ENCODE measurements at regions of chr4 and their contacts with region 1.

Region 1: DNA sequence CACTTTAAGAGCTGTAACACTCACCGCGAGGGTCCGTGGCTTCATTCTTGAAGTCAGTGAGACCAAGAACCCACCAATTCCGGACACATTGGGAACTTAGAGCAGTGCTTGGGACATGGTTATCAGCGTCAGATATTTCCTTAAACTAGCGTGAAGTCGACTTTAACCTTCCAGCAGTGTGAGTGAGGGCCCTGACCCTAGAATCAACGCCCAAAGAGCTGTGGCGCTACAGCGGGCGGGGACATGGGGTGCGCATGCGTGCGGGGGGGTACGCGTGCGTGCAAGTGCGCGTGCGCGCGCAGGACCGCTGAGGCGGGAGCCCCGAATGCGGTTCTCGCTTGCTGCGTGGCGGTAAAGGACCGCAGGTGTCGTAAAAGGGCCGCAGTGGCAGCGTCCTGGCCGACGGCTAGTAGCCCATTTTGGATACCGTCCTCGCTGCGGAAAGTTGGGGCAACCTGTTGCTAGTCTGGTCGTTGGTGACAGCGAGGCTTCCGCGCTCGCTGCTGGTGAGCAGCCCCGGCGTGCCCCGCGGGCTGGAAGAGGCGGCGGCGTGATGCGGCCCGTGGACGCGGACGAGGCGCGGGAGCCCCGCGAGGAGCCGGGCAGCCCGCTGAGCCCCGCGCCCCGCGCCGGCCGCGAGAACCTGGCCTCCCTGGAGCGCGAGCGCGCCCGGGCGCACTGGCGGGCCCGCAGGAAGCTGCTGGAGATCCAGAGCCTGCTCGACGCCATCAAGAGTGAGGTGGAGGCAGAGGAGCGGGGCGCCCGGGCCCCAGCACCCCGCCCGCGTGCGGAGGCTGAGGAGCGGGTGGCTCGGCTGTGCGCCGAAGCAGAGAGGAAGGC is 19.8 kb upstream of the S100P start:
- DNase-seq: peak; percentile 90
- H3K4me3 ChIP-seq: peak overlapping the region; percentile 64
- H3K27ac ChIP-seq: no peak overlapping the region
- H3K27me3 ChIP-seq: no peaks in the 10 kb centered on the region
- CTCF ChIP-seq: no peak

Region 2: DNA sequence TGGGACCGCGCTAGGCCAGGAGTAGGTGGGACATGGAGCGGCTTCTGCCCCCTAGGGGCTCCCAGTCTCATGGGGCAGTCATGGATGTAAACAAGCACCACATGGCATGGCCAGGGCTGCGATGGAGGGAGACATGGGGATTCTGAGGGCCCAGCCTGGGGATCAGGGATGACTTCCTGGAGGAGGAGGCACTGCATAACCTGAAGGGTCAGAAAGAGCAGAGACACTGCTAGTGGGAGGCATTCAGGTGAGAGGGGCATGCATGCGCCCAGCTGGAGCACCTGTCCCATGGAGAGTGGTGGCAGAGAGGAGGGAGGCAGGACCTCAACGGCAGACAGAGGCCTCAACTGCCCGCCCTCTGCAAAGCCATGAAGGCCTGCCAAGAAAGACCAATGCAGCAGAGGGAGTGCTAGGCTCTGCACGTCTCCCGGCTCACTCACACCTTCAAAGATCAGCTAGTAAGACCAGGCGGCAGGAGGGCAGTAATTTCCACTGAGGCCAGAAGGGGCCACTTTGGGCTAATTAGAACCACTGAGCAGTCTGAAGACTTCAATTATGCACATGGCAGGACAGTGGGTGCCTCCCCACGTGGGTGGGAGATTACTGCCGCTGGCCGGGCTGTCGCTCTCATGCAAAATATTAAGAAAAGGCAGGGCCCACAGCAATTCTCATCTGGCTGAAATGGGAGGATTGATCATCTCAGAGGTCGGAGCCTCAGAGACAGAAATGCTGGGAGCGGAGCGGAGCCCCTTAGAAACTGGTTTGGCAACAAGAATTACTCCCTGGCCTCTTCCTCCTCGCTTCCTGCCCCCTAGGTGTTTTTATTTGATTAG is 271.1 kb before region 1 on chr4:
- CTCF ChIA-PET with region 1: no interaction called
- POLR2A ChIA-PET with region 1: no interaction called
- DNase-seq: no peak
- H3K4me3 ChIP-seq: no peak overlapping the region
- H3K27ac ChIP-seq: no peak overlapping the region
- H3K27me3 ChIP-seq: peaks cover 23% of the 10 kb centered on the region
- CTCF ChIP-seq: no peak

Region 3: DNA sequence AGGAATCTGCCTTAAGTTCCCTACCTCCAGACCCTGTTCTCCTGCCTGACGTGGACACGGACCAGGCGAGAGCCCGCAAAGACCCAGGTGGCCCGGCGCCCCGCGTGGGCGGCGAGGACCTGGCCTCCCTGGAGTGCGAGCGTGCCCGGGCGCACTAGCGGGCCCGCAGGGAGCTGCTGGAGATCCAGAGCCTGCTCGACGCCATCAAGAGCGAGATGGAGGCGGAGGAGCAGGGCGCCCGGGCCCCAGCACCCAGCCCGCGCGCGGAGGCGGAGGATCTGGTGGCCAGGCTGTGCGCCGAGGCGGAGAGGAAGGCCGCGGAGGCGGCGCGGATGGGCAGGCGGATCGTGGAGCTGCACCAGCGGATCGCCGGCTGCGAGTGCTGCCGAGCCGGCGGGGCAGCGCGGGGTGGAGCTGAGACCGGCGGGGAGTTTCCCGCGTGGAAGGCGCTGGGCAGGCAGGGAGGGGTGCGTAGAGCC is 15.2 kb before region 1 on chr4:
- CTCF ChIA-PET with region 1: interaction called, 6 read pairs
- POLR2A ChIA-PET with region 1: interaction called, 13 read pairs
- DNase-seq: no peak
- H3K4me3 ChIP-seq: peak overlapping the region; percentile 17; the same call in 1 of the 2 replicates
- H3K27ac ChIP-seq: no peak overlapping the region
- H3K27me3 ChIP-seq: peaks cover 1% of the 10 kb centered on the region
- CTCF ChIP-seq: no peak

Region 4: GRCh38 chr4:6663596-6664393 is 10.1 kb before region 1 on chr4:
- CTCF ChIA-PET with region 1: interaction called, 6 read pairs
- POLR2A ChIA-PET with region 1: interaction called, 13 read pairs
- DNase-seq: no peak
- H3K4me3 ChIP-seq: no peak overlapping the region
- H3K27ac ChIP-seq: no peak overlapping the region
- H3K27me3 ChIP-seq: peaks cover 6% of the 10 kb centered on the region
- CTCF ChIP-seq: no peak